Head of caudate nucleus (tissue), 42 donors: ENCODE measurements at regions of chr1 and their contacts with region 1.

Region 1: DNA sequence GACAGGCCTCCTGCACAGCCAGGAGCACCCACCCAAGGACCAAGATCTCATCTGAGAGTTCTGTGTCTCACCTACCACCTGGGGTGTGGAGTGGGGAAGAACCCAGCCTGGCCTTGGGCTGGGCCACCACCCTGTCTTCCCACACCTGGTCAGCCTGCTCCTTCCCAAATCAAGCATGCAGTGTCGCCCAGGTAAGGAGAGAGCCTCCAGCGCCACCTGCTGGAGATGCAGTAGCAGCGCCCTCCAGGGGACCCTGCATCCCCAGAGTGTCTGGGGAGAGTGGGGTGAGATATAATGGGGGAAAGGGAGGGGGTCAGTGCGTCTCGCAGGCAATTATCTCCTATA is 32.3 kb downstream of the KIAA2013 start:
- DNase-seq: peak in 41 of 42 donors; percentile 31 to 82 (median 62)

Region 2: DNA sequence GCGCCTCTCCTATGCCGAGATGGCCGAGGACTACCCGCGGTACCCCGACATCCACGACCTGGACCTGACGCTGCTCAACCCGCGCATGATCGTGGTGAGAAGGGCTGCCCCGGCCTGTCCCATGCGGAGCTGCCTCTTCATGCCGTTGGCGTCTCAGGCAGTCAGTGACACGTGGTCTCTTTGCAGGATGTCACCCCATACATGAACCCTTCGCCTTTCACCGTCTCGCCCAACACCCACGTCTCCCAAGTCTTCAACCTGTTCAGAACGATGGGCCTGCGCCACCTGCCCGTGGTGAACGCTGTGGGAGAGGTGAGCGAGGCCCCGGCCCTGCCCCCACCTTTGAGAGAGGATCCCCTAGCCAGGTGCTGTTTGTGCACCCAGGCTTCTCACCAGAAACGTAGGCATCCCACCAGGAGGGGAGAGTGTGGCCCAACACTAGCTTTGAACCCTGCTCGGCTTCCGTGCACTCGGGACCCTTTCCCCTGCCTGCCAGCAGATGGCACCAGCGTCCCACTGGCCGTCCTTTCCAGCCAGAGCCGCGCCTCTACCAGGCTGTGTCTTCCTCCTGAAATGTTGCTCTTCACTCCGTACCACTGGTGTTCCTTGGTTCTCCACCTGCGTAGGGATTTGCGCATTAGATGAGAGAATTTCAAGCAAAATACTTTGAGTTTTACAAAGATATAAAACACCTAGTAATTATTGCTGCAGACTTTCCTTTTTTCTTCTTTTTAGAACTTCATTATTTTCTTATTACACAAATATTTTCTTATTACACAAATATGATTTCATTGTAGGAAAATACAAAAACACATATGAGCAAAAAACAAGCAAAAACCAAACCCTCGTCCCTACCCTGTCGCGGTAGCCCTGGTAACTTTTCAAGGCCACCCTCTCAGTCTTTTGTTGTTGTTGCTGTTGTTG is 55.3 kb before region 1 on chr1:
- intact Hi-C with region 1: loop called (anchors 5 kb)
- DNase-seq: peak; percentile 69 to 92 (median 82)

Region 3: GRCh38 chr1:11970441-11971185 is 76.7 kb after region 1 on chr1:
- intact Hi-C with region 1: no loop called
- DNase-seq: no peak